ENCODE measurements at regions of chr2 and their contacts with region 1.

Region 1: DNA sequence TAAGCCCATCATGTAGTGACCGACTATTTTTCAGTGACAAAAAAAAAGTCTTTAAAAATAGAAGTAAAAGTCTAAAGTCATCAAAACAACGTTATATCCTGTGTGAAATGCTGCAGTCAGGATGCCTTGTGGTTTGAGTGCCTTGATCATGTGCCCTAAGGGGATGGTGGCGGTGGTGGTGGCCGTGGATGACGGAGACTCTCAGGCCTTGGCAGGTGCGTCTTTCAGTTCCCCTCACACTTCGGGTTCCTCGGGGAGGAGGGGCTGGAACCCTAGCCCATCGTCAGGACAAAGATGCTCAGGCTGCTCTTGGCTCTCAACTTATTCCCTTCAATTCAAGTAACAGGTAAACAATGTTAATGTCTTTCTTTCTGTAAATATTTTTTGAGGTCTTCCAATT is at the start of gene CD28:
- DNase-seq: peak; percentile 95
- ATAC-seq: peak; percentile 75
- H3K4me3 Mint-ChIP-seq: peak within 1 kb of the TSS; percentile 84
- H3K27ac Mint-ChIP-seq: peak within 1 kb of the TSS; percentile 100
- H3K4me1 Mint-ChIP-seq: peaks cover 44% of the 10 kb centered on the region
- H3K27me3 Mint-ChIP-seq: no peaks in the 10 kb centered on the region
- total RNA-seq, gene CD28: 175 TPM

Region 2: DNA sequence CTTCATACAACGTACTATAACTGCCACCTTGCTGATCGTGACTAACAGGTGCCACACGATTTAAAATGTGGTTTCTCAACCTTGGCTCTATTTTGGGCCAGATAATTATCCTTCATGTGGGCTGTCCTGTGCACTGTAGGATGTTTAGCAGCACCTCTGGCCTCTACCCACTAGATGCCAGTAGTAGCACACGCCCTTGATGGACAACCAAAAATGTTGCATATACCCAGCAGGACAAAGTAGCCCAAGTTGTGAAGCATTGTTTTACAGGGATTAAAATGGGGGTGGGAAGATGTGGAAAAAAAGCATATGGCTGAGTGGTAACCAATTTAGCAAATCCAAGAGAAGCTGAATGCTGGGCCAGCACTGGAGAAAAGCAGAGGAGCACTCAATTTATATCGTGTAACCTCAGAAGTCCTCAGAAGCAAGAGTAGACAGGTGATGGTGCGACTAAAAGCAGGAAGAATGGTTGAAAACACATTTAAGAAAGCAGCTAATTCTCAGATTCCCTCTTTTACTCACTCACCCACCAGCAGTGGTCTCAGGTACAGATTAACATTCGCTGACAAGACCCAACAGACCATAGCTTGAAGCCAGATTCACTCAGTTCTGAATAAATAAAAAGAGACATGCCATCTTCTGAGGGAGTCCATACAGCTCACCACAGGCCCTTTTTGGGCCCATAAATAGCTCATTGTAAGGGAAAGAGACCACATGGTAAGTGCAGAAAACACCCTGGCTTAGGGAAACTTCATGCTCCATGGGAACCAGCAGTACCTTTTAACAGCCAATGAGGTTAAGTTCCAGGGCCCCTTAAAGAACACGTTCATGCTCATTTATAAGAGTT is 221.9 kb before region 1 on chr2:
- CTCF ChIA-PET with region 1: interaction called, 4 read pairs
- POLR2A ChIA-PET with region 1: no interaction called
- intact Hi-C with region 1: loop called in 1 of 2 experiments (anchors 5 kb)
- DNase-seq: peak; percentile 66
- ATAC-seq: peak; percentile 91
- H3K4me3 Mint-ChIP-seq: no peak overlapping the region
- H3K27ac Mint-ChIP-seq: peak overlapping the region; percentile 62
- H3K4me1 Mint-ChIP-seq: peaks cover 11% of the 10 kb centered on the region
- H3K27me3 Mint-ChIP-seq: no peaks in the 10 kb centered on the region

Region 3: DNA sequence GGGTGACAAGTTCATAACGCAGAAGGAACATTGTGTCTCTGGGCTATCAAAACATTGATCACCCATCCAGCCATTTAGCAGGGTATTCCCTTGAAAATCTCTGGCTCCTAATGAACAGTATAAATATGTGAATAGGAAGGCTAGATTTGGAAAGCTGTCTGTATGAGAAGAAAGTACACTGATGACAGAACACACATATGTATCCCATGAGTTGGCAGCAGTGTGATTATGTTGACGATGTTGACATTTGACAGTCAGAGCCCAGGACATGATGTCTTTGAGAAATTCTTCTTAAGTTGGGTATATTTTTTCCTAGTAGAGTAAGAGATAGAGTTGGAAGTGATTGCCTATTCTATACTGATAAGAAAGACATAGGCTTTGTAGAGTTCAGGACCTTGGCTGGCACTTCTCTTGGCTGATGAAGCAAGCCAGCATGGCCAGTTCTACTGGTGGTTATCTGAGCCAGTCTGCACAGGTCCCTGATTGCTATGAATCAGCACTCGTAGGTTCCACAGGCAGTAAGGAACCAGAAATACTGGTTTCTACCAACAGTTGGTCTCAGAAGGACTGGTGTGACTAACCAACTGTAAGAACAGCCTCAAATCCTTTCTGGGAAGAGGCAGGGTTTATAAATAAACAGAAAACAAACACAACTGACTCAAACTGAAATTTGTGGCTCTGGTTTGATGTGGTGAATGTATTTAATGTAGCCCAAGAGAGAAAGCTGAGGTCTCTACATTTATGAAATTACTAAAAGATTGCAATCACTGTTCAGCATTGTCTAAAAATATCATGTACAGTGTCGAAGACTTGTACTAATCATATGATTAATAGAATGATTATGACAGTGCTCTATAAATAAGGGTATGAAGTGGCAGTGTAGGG is 127.4 kb before region 1 on chr2:
- CTCF ChIA-PET with region 1: interaction called, 5 read pairs
- POLR2A ChIA-PET with region 1: no interaction called
- intact Hi-C with region 1: loop called (anchors 1 kb)
- DNase-seq: peak; percentile 67
- ATAC-seq: peak; percentile 95
- H3K4me3 Mint-ChIP-seq: no peak overlapping the region
- H3K27ac Mint-ChIP-seq: peak overlapping the region; percentile 78
- H3K4me1 Mint-ChIP-seq: peaks cover 21% of the 10 kb centered on the region
- H3K27me3 Mint-ChIP-seq: no peaks in the 10 kb centered on the region

Region 4: DNA sequence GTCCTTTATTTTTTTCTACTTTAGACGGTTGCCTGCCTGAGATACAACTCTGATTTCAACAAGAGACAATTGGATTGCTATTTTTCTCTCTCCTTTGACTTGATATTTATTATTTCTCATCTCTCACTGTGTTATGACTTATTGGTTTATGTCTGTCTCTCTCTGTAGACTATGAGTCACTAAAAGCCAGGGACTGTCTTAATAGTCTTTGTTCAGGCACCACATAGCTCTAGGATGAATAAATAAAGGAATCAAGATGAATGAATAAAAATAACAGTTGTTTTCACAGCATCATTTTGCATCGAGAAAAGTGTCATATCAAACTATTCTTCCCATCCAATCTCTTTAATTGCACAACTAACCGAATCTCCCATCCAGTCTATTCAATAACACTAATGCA is 31.3 kb before region 1 on chr2:
- CTCF ChIA-PET with region 1: no interaction called
- POLR2A ChIA-PET with region 1: no interaction called
- intact Hi-C with region 1: no loop called
- DNase-seq: no peak
- ATAC-seq: peak; percentile 48
- H3K4me3 Mint-ChIP-seq: no peak overlapping the region
- H3K27ac Mint-ChIP-seq: no peak overlapping the region
- H3K4me1 Mint-ChIP-seq: peaks cover 28% of the 10 kb centered on the region
- H3K27me3 Mint-ChIP-seq: no peaks in the 10 kb centered on the region

Region 5: GRCh38 chr2:203740780-203741281 is 34.4 kb after region 1 on chr2:
- CTCF ChIA-PET with region 1: interaction called, 14 read pairs
- POLR2A ChIA-PET with region 1: interaction called, 59 read pairs
- intact Hi-C with region 1: loop called (anchors 1 to 2 kb)
- DNase-seq: peak; percentile 52
- ATAC-seq: peak; percentile 70
- H3K4me3 Mint-ChIP-seq: peak overlapping the region; percentile 62
- H3K27ac Mint-ChIP-seq: peak overlapping the region; percentile 99
- H3K4me1 Mint-ChIP-seq: peaks cover 92% of the 10 kb centered on the region
- H3K27me3 Mint-ChIP-seq: no peaks in the 10 kb centered on the region

Region 6: GRCh38 chr2:203782262-203782976 is 76.0 kb after region 1 on chr2:
- CTCF ChIA-PET with region 1: interaction called, 3 read pairs
- POLR2A ChIA-PET with region 1: interaction called, 4 read pairs
- intact Hi-C with region 1: loop called (anchors 1 kb)
- DNase-seq: peak; percentile 81
- ATAC-seq: peak; percentile 94
- H3K4me3 Mint-ChIP-seq: no peak overlapping the region
- H3K27ac Mint-ChIP-seq: peak overlapping the region; percentile 89
- H3K4me1 Mint-ChIP-seq: peaks cover 52% of the 10 kb centered on the region
- H3K27me3 Mint-ChIP-seq: no peaks in the 10 kb centered on the region

Region 7: GRCh38 chr2:203893401-203893800 is 187.0 kb after region 1 on chr2:
- CTCF ChIA-PET with region 1: no interaction called
- POLR2A ChIA-PET with region 1: no interaction called
- intact Hi-C with region 1: loop called in 1 of 2 experiments (anchors 1 kb)
- DNase-seq: no peak
- ATAC-seq: no peak
- H3K4me3 Mint-ChIP-seq: peak overlapping the region; percentile 23
- H3K27ac Mint-ChIP-seq: peak overlapping the region; percentile 85
- H3K4me1 Mint-ChIP-seq: peaks cover 78% of the 10 kb centered on the region
- H3K27me3 Mint-ChIP-seq: peaks cover 2% of the 10 kb centered on the region

Measured in activated CD4-positive, alpha-beta T cell treated with anti-CD3 and anti-CD28 coated beads for 36 hours (primary cell).